HCT116 (cell line): ENCODE measurements at regions of chr4 and their contacts with region 1.

Region 1: DNA sequence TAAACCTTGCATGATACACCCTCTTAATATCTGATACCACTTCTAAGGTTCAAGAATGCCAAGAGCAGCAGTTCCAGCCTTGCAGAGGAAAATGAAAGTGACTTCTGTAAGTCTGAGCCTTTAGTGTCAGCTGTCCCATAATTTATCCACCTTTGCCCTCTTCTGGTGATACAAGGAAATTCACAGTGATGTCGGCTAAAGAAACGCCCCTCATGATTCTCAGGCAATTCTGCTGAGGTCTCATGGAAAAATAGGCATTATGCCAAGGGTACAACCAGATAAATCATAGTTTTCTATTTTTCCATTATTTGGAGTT is 172.2 kb upstream of the CXCL13 start:
- DNase-seq: peak; percentile 42
- ATAC-seq: peak; percentile 85
- H3K4me3 ChIP-seq: no peak overlapping the region
- H3K27ac ChIP-seq: no peak overlapping the region
- H3K4me1 ChIP-seq: peaks cover 0 to 4% of the 10 kb centered on the region in 2 experiments; a peak in 2 of 4 replicates
- H3K27me3 ChIP-seq: 0 out of 2 replicates have a peak, but pooled peaks cover 5% of the 10 kb centered on the region
- CTCF ChIP-seq: peak; percentile 49 to 68 (median 59); a peak in 5 of 6 replicates
- POLR2A ChIP-seq: no peak
- RAD21 ChIP-seq: peak; percentile 75

Region 2: GRCh38 chr4:75989846-75990528 is 1443.4 kb before region 1 on chr4:
- CTCF ChIA-PET with region 1: no interaction called
- POLR2A ChIA-PET with region 1: no interaction called
- RAD21 ChIA-PET with region 1: no interaction called
- intact Hi-C with region 1: no loop called
- DNase-seq: no peak
- ATAC-seq: no peak
- H3K4me3 ChIP-seq: peak overlapping the region; percentile 84 to 91
- H3K27ac ChIP-seq: peak overlapping the region; percentile 25
- H3K4me1 ChIP-seq: peaks cover 7 to 17% of the 10 kb centered on the region in 2 experiments; a peak in 3 of 4 replicates
- H3K27me3 ChIP-seq: no peaks in the 10 kb centered on the region
- CTCF ChIP-seq: no peak
- POLR2A ChIP-seq: no peak
- RAD21 ChIP-seq: no peak

Region 3: GRCh38 chr4:77367638-77368037 is 65.7 kb before region 1 on chr4:
- CTCF ChIA-PET with region 1: interaction called, 4 read pairs
- POLR2A ChIA-PET with region 1: no interaction called
- RAD21 ChIA-PET with region 1: interaction called in 1 of 2 experiments, 3 read pairs
- intact Hi-C with region 1: loop called (anchors 2 kb)
- DNase-seq: no peak
- ATAC-seq: no peak
- H3K4me3 ChIP-seq: no peak overlapping the region
- H3K27ac ChIP-seq: no peak overlapping the region
- H3K4me1 ChIP-seq: no peaks in the 10 kb centered on the region
- H3K27me3 ChIP-seq: no peaks in the 10 kb centered on the region; the same call in 1 of the 2 replicates
- CTCF ChIP-seq: no peak
- POLR2A ChIP-seq: no peak
- RAD21 ChIP-seq: no peak